Activated naive CD8-positive, alpha-beta T cell treated with anti-CD3 and anti-CD28 coated beads, Interleukin-2, amount 10 ng/mL, durations not matched to agents 7 days and 5 days (primary cell): ENCODE measurements at regions of chr21 and their contacts with region 1.

Region 1: DNA sequence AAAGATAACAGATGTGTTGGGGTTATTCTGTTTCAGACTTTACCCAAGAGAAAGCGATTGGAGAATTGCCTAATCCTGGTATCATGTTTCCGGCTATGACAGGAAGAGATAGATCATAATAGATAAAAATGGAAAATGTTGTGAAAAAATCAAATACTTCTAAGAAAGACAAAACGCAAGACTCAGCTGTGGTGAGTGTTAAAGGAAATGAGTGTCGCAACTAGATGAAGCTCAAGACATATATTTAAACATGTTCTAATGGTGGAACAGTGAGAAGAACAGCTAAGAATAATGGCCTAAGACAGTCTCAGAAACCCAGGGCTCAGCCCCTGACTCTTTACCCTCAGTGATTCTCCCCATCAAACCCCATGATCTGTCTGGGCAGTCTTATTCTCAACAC is 426.7 kb upstream of the RUNX1 start:
- DNase-seq: no peak
- ATAC-seq: peak; percentile 88
- H3K4me3 Mint-ChIP-seq: peak overlapping the region; percentile 63
- H3K27ac Mint-ChIP-seq: peak overlapping the region; percentile 79
- H3K4me1 Mint-ChIP-seq: peaks cover 59% of the 10 kb centered on the region
- H3K27me3 Mint-ChIP-seq: no peaks in the 10 kb centered on the region

Region 2: GRCh38 chr21:35491920-35492678 is 16.3 kb after region 1 on chr21:
- POLR2A ChIA-PET with region 1: no interaction called
- DNase-seq: no peak
- ATAC-seq: no peak
- H3K4me3 Mint-ChIP-seq: no peak overlapping the region
- H3K27ac Mint-ChIP-seq: no peak overlapping the region
- H3K4me1 Mint-ChIP-seq: peaks cover 4% of the 10 kb centered on the region
- H3K27me3 Mint-ChIP-seq: no peaks in the 10 kb centered on the region

Region 3: GRCh38 chr21:35528116-35529042 is 52.6 kb after region 1 on chr21:
- POLR2A ChIA-PET with region 1: interaction called, 13 read pairs
- DNase-seq: peak; percentile 68
- ATAC-seq: peak; percentile 66
- H3K4me3 Mint-ChIP-seq: peak overlapping the region; percentile 85
- H3K27ac Mint-ChIP-seq: peak overlapping the region; percentile 91
- H3K4me1 Mint-ChIP-seq: peaks cover 41% of the 10 kb centered on the region
- H3K27me3 Mint-ChIP-seq: no peaks in the 10 kb centered on the region